ENCODE measurements at regions of chr12 and their contacts with region 1.

Region 1: GRCh38 chr12:98593351-98594049 is at the start of gene SLC25A3:
- DNase-seq: peak; percentile 81
- ATAC-seq: peak; percentile 97
- H3K4me3 Mint-ChIP-seq: peak within 1 kb of the TSS; percentile 96
- H3K27ac Mint-ChIP-seq: peak within 1 kb of the TSS; percentile 96
- H3K4me1 Mint-ChIP-seq: peaks cover 36% of the 10 kb centered on the region
- H3K27me3 Mint-ChIP-seq: no peaks in the 10 kb centered on the region
- CTCF ChIP-seq: no peak
- total RNA-seq, gene SLC25A3: 508 and 518 TPM in 2 replicates

Region 2: GRCh38 chr12:98516184-98516873 is 77.2 kb before region 1 on chr12:
- CTCF ChIA-PET with region 1: interaction called, 4 read pairs
- POLR2A ChIA-PET with region 1: interaction called, 21 read pairs
- intact Hi-C with region 1: loop called (anchors 1 kb)
- DNase-seq: peak; percentile 71
- ATAC-seq: peak; percentile 63
- H3K4me3 Mint-ChIP-seq: peak overlapping the region; percentile 98
- H3K27ac Mint-ChIP-seq: peak overlapping the region; percentile 97
- H3K4me1 Mint-ChIP-seq: peaks cover 61% of the 10 kb centered on the region
- H3K27me3 Mint-ChIP-seq: no peaks in the 10 kb centered on the region
- CTCF ChIP-seq: no peak

Region 3: DNA sequence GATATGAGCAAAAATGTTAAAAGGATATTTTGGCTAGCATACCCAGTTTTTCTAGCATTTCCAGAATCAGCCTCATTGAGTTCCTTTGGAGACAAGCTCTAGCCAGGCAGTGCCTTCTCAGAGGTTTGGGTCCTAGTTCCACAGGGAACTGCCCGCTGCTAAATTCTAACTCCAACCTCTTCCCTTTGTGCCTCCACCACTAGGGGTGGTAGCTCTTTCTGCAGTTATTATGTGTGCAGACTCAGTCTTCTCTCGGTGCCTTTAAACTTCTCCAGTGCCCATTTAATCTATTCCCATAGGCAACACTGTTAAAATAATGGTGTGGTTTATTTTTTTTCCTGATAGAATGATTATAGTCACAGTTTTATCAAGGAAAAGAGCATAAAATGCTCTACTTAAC is 21.5 kb before region 1 on chr12:
- CTCF ChIA-PET with region 1: interaction called, 25 read pairs
- POLR2A ChIA-PET with region 1: interaction called, 14 read pairs
- intact Hi-C with region 1: loop called (anchors 1 kb)
- DNase-seq: no peak
- ATAC-seq: no peak
- H3K4me3 Mint-ChIP-seq: no peak overlapping the region
- H3K27ac Mint-ChIP-seq: no peak overlapping the region
- H3K4me1 Mint-ChIP-seq: no peaks in the 10 kb centered on the region
- H3K27me3 Mint-ChIP-seq: no peaks in the 10 kb centered on the region
- CTCF ChIP-seq: no peak

Region 4: GRCh38 chr12:98606357-98606988 is 13.0 kb after region 1 on chr12:
- CTCF ChIA-PET with region 1: interaction called, 6 read pairs
- POLR2A ChIA-PET with region 1: interaction called, 54 read pairs
- intact Hi-C with region 1: loop called (anchors 1 kb)
- DNase-seq: no peak
- ATAC-seq: no peak
- H3K4me3 Mint-ChIP-seq: no peak overlapping the region
- H3K27ac Mint-ChIP-seq: no peak overlapping the region
- H3K4me1 Mint-ChIP-seq: peaks cover 7% of the 10 kb centered on the region
- H3K27me3 Mint-ChIP-seq: no peaks in the 10 kb centered on the region
- CTCF ChIP-seq: no peak

Region 5: DNA sequence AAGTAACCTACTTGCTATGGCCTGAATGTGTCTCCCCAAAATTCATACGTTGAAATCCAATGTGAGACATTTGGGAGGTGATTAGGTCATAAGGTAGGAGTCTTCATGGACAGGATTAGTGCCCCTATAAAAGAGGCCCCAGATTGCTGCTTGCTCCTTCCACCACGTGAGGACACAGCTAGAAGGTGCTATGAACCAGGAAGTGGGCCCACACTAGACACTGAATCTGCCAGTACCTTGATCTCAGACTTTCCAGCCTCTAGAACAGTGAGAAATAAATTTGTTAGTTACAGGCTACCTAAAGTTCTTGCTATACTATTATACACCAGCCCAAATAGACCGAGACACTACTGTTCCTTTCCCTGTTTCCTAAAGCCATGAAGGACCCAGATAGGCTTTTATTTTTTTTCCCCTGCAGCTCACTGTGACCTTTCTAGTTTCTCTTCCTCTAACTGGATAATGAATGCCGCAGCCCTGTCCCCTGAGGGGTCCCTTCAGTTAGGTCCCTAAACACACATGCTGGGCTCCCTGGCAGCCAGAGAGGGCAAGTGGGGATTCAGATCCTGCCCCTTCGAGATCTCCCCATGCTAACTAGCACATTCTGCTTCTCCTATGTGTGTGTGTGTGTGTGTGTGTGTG is 19.3 kb after region 1 on chr12:
- CTCF ChIA-PET with region 1: interaction called, 6 read pairs
- POLR2A ChIA-PET with region 1: interaction called, 54 read pairs
- intact Hi-C with region 1: loop called (anchors 1 kb)
- DNase-seq: peak; percentile 40
- ATAC-seq: peak; percentile 95
- H3K4me3 Mint-ChIP-seq: peak overlapping the region; percentile 59
- H3K27ac Mint-ChIP-seq: peak overlapping the region; percentile 96
- H3K4me1 Mint-ChIP-seq: peaks cover 19% of the 10 kb centered on the region
- H3K27me3 Mint-ChIP-seq: no peaks in the 10 kb centered on the region
- CTCF ChIP-seq: no peak

Region 6: DNA sequence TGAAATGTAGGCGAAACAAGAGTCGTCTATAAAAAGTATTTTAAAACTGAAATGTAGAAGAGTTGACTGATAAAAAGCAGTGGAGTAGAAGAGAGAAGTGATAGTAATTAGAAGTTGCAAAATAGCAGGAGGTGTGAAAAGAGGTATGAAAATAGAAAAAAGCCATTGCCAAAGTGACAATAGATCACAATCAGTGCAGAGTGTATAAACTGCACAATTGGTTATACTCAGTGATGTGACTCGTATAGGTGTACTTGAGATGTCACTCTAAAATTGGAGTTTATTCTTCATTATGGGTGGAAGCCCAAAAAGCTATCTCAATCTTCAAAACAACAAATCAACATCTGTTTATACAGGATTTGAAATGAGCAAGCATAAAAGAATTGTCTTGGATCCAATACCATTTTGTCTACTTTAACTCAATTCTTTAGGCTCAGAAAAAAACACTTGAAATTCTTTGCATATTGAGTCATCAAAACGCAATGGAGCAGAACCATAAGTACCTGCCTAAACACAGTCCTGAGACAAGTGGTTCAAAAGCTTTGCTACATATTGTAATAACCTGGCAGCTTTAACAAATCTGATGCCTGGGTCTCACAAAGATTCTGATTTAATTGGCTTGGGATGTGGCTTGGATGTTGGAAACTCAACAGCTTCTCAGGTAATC is 42.3 kb after region 1 on chr12:
- CTCF ChIA-PET with region 1: no interaction called
- POLR2A ChIA-PET with region 1: interaction called, 11 read pairs
- intact Hi-C with region 1: no loop called
- DNase-seq: no peak
- ATAC-seq: peak; percentile 87
- H3K4me3 Mint-ChIP-seq: no peak overlapping the region
- H3K27ac Mint-ChIP-seq: peak overlapping the region; percentile 25
- H3K4me1 Mint-ChIP-seq: peaks cover 18% of the 10 kb centered on the region
- H3K27me3 Mint-ChIP-seq: no peaks in the 10 kb centered on the region
- CTCF ChIP-seq: no peak